ENCODE measurements at regions of chr16 and their contacts with region 1.

Region 1: GRCh38 chr16:75238132-75238852 is 13.1 kb downstream of the BCAR1 start:
- DNase-seq: no peak
- ATAC-seq: no peak
- H3K4me3 ChIP-seq: no peak overlapping the region
- H3K4me3 Mint-ChIP-seq: no peak overlapping the region
- H3K27ac ChIP-seq: no peak overlapping the region
- H3K27ac Mint-ChIP-seq: no peak overlapping the region
- H3K4me1 ChIP-seq: peaks cover 0 to 12% of the 10 kb centered on the region in 2 experiments
- H3K4me1 Mint-ChIP-seq: peaks cover 2 to 6% (median 2%) of the 10 kb centered on the region in 3 donors
- H3K27me3 ChIP-seq: peaks cover 0 to 9% of the 10 kb centered on the region in 2 experiments
- H3K27me3 Mint-ChIP-seq: peaks cover 0 to 3% of the 10 kb centered on the region in 2 donors

Region 2: GRCh38 chr16:75379911-75380847 is 141.9 kb after region 1 on chr16:
- CTCF ChIA-PET with region 1: interaction called, 32 to 93 read pairs
- POLR2A ChIA-PET with region 1: interaction called, 3 read pairs
- DNase-seq: peak; percentile 5 to 68 (median 40)
- ATAC-seq: peak; percentile 90 to 97 (median 94)
- H3K4me3 ChIP-seq: no peak overlapping the region
- H3K4me3 Mint-ChIP-seq: peak overlapping the region; percentile 59 to 78 (median 62)
- H3K27ac ChIP-seq: peak overlapping the region; percentile 38
- H3K27ac Mint-ChIP-seq: peak overlapping the region; percentile 66 to 83
- H3K4me1 ChIP-seq: peaks cover 18 to 29% of the 10 kb centered on the region in 2 experiments
- H3K4me1 Mint-ChIP-seq: peaks cover 46 to 54% (median 52%) of the 10 kb centered on the region in 3 donors
- H3K27me3 ChIP-seq: no peaks in the 10 kb centered on the region
- H3K27me3 Mint-ChIP-seq: no peaks in the 10 kb centered on the region

Region 3: GRCh38 chr16:75385507-75386152 is 147.3 kb after region 1 on chr16:
- CTCF ChIA-PET with region 1: interaction called, 32 to 93 read pairs
- POLR2A ChIA-PET with region 1: interaction called, 3 read pairs
- DNase-seq: peak in 3 of 35 experiments; percentile 5 to 81 (median 17)
- ATAC-seq: peak in 1 of 4 experiments; percentile 51
- H3K4me3 ChIP-seq: no peak overlapping the region
- H3K4me3 Mint-ChIP-seq: no peak overlapping the region
- H3K27ac ChIP-seq: no peak overlapping the region
- H3K27ac Mint-ChIP-seq: peak overlapping the region in 1 of 2 donors; percentile 64
- H3K4me1 ChIP-seq: peaks cover 11 to 19% of the 10 kb centered on the region in 2 experiments
- H3K4me1 Mint-ChIP-seq: peaks cover 21 to 32% (median 21%) of the 10 kb centered on the region in 3 donors
- H3K27me3 ChIP-seq: no peaks in the 10 kb centered on the region
- H3K27me3 Mint-ChIP-seq: no peaks in the 10 kb centered on the region

Region 4: DNA sequence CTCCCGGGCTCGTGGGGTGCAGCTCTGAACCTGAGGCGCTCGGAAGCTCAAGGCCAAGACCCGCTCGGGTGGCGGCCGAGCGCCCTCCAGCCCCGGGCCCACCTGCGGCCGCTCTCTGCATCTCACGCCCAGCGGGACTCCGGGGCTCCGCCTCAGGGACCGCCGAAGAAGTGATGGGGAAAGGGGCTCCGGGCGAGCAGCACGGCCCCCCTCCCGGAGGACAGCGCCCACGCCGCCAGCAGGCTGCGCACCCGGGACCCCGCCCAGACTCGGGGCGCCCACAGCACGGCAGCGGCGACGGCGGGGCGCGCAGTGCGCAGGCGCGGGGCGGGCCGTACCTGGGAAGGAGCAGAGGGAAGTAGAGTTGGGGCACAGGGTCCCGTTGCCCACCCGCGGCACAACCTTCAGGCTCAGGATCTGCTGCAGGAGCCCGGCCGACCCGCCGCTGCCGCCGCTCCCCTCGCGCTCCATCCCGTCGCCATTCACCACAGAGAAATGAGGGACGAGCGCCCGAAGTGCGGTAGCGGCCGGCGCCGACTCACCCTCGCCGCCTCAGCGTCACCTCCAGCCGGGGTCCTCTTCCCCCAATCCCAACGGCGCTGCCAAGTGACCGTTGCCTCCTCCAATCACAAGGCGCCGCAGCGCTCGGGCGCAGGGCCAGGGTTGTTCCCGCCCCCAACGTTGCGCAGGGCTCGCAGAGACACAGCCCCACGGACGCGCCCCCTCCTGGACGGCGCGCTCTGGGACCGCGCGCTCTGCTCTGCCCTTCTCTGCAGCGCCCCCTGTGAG is 226.0 kb after region 1 on chr16 and contains the start of gene TMEM170A:
- CTCF ChIA-PET with region 1: interaction called in 1 of 2 experiments, 10 read pairs
- POLR2A ChIA-PET with region 1: no interaction called
- DNase-seq: peak; percentile 93 to 100 (median 97)
- ATAC-seq: peak; percentile 89 to 92 (median 92)
- H3K4me3 ChIP-seq: peak within 1 kb of the TSS; percentile 91 to 97
- H3K4me3 Mint-ChIP-seq: peak within 1 kb of the TSS; percentile 82 to 93 (median 85)
- H3K27ac ChIP-seq: peak within 1 kb of the TSS; percentile 98
- H3K27ac Mint-ChIP-seq: peak within 1 kb of the TSS; percentile 91 to 95
- H3K4me1 ChIP-seq: peaks cover 9 to 32% of the 10 kb centered on the region in 2 experiments
- H3K4me1 Mint-ChIP-seq: peaks cover 44 to 50% (median 46%) of the 10 kb centered on the region in 3 donors
- H3K27me3 ChIP-seq: peaks cover 0 to 3% of the 10 kb centered on the region in 2 experiments
- H3K27me3 Mint-ChIP-seq: no peaks in the 10 kb centered on the region
- total RNA-seq, gene TMEM170A: 37.7 to 45.8 (median 41.9) TPM